Activated CD4-positive, alpha-beta memory T cell treated with anti-CD3 and anti-CD28 coated beads for 36 hours (primary cell): ENCODE measurements at regions of chr20 and their contacts with region 1.

Region 1: DNA sequence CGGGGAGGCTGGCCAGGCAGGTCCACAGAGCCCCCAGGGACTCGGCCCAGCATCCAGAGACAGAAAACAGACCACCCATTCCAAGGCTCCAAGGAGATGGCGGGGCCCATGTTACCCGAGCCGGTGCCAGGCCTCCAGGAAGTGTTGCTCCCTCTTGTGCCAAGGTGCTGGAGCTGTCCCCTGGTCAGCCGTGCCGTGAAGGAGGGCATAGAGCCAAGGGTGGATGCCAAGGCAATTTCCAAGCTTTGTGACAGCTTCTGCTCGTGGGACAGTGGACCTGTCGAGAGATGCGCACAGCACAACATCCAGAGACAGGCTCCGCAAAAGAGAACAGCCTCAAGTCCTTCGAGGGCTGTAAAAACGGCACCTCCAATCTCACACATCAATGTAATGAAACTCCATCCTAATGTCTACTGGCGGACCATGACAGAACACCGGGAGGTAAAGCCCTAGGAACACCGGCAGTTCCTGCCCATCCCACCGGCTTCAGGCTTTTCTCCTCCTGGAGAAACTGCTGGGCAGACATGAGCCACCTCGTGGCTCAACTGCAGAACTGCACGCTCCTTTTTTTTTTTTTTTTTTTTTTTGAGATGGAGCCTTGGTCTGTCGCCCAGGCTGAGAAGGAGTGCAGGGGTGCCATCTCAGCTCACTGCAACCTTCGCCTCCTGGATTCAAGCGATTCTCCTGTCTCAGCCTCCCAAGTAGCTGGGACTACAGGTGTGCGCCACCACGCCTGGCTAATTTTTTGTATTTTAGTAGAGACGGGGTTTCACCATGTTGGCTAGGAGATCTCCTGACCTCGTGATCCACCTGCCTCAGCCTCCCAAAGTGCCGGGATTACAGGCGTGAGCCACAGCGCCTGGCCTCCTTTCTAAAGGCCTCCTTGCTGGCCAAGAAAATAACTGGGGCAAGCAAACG is 30.9 kb upstream of the AVP start:
- DNase-seq: peak; percentile 29
- H3K4me3 Mint-ChIP-seq: no peak overlapping the region
- H3K27ac Mint-ChIP-seq: no peak overlapping the region
- H3K4me1 Mint-ChIP-seq: peaks cover 7% of the 10 kb centered on the region
- H3K27me3 Mint-ChIP-seq: no peaks in the 10 kb centered on the region

Region 2: DNA sequence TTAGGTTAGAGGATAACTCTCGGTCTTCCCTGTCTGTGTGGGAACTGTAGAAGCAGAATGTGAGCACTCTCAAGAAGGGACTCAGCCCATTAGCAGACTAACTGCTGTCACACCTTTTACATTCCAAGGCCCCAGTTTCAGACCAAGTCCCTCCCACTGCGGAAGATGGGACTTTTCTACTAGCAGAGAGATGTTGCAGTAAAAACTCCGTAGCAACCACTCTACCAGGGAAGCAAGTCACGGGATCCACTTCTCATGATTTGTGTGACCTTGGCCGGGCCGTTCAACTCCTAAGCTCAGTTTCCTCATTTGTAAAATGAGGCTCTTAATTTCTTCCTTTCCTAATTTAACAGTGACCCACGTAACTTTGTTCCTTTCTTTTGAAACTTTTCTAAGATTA is 200.7 kb after region 1 on chr20:
- CTCF ChIA-PET with region 1: no interaction called
- POLR2A ChIA-PET with region 1: no interaction called
- intact Hi-C with region 1: loop called (anchors 5 kb)
- DNase-seq: no peak
- H3K4me3 Mint-ChIP-seq: no peak overlapping the region
- H3K27ac Mint-ChIP-seq: no peak overlapping the region
- H3K4me1 Mint-ChIP-seq: no peaks in the 10 kb centered on the region
- H3K27me3 Mint-ChIP-seq: no peaks in the 10 kb centered on the region